H1 (cell line): ENCODE measurements at regions of chr17 and their contacts with region 1.

Region 1: GRCh38 chr17:8887834-8888703 is 20.6 kb upstream of the PIK3R6 start:
- DNase-seq: peak in 1 of 2 experiments; percentile 87
- H3K4me3 ChIP-seq: no peak overlapping the region
- H3K27ac ChIP-seq: no peak overlapping the region
- H3K4me1 ChIP-seq: peaks cover 0 to 9% (median 3%) of the 10 kb centered on the region in 4 experiments; a peak in 3 of 7 replicates
- H3K27me3 ChIP-seq: no peaks in the 10 kb centered on the region
- CTCF ChIP-seq: peak; percentile 67 to 83 (median 71)
- EP300 ChIP-seq: no peak
- POLR2A ChIP-seq: no peak
- RAD21 ChIP-seq: peak; percentile 73 to 82

Region 2: GRCh38 chr17:8697323-8697741 is 190.7 kb before region 1 on chr17:
- CTCF ChIA-PET with region 1: no interaction called
- POLR2A ChIA-PET with region 1: no interaction called
- DNase-seq: no peak
- H3K4me3 ChIP-seq: peak overlapping the region in 1 of 4 experiments; percentile 6; a peak in 2 of 8 replicates
- H3K27ac ChIP-seq: peak overlapping the region; percentile 55; the same call in 1 of the 2 replicates
- H3K4me1 ChIP-seq: peaks cover 12 to 24% (median 18%) of the 10 kb centered on the region in 4 experiments; a peak in 6 of 7 replicates
- H3K27me3 ChIP-seq: no peaks in the 10 kb centered on the region
- CTCF ChIP-seq: no peak
- EP300 ChIP-seq: no peak
- POLR2A ChIP-seq: peak in 1 of 2 experiments; percentile 8; a peak in 1 of 3 replicates
- RAD21 ChIP-seq: no peak

Region 3: DNA sequence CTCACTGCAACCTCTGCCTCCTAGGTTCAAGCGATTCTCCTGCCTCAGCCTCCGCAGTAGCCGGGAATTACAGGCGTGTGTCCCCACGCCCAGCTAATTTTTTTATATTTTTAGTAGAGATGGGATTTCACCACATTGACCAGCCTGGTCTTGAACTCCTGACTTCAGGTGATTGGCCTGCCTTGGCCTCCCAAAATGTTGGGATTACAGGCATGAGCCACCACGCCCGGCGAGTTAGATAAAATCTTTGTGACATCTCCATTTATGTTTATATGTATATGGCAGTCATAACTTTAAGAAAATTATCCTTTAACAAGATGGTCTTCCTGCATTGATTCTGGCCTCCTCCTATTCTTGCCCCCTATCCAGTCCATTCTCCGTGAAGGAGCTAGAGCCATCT is 167.5 kb before region 1 on chr17:
- CTCF ChIA-PET with region 1: no interaction called
- POLR2A ChIA-PET with region 1: no interaction called
- DNase-seq: no peak
- H3K4me3 ChIP-seq: no peak overlapping the region
- H3K27ac ChIP-seq: no peak overlapping the region
- H3K4me1 ChIP-seq: no peaks in the 10 kb centered on the region
- H3K27me3 ChIP-seq: no peaks in the 10 kb centered on the region
- CTCF ChIP-seq: no peak
- EP300 ChIP-seq: no peak
- POLR2A ChIP-seq: no peak
- RAD21 ChIP-seq: no peak

Region 4: GRCh38 chr17:8818047-8818446 is 70.0 kb before region 1 on chr17:
- CTCF ChIA-PET with region 1: no interaction called
- POLR2A ChIA-PET with region 1: no interaction called
- DNase-seq: peak in 1 of 2 experiments; percentile 35
- H3K4me3 ChIP-seq: no peak overlapping the region
- H3K27ac ChIP-seq: no peak overlapping the region
- H3K4me1 ChIP-seq: no peaks in the 10 kb centered on the region; a peak in 1 of 7 replicates
- H3K27me3 ChIP-seq: no peaks in the 10 kb centered on the region
- CTCF ChIP-seq: no peak
- EP300 ChIP-seq: no peak
- POLR2A ChIP-seq: no peak
- RAD21 ChIP-seq: no peak

Region 5: DNA sequence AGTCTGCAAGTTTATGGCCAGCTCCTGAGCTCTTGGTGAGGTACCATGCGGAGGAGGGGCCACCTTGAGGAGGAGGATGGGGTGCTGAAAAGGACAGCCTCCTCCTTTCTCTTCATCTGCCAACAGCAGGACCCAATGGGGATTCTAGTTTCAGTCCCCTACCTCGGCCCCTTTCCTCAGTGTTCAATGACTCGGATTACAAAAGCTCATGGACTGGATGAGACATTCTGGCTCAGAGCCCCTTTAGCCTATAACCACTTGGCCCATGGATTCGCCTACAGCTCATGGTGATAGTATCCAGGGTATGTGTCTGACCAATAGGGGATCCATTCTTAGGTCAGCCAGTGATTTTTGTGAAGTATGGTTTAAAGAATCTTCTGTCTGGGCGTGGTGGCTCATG is 12.1 kb before region 1 on chr17:
- CTCF ChIA-PET with region 1: interaction called, 19 read pairs
- POLR2A ChIA-PET with region 1: no interaction called
- DNase-seq: no peak
- H3K4me3 ChIP-seq: no peak overlapping the region
- H3K27ac ChIP-seq: no peak overlapping the region
- H3K4me1 ChIP-seq: peaks cover 0 to 9% (median 7%) of the 10 kb centered on the region in 4 experiments; a peak in 6 of 7 replicates
- H3K27me3 ChIP-seq: no peaks in the 10 kb centered on the region
- CTCF ChIP-seq: no peak
- EP300 ChIP-seq: no peak
- POLR2A ChIP-seq: no peak
- RAD21 ChIP-seq: no peak

Region 6: DNA sequence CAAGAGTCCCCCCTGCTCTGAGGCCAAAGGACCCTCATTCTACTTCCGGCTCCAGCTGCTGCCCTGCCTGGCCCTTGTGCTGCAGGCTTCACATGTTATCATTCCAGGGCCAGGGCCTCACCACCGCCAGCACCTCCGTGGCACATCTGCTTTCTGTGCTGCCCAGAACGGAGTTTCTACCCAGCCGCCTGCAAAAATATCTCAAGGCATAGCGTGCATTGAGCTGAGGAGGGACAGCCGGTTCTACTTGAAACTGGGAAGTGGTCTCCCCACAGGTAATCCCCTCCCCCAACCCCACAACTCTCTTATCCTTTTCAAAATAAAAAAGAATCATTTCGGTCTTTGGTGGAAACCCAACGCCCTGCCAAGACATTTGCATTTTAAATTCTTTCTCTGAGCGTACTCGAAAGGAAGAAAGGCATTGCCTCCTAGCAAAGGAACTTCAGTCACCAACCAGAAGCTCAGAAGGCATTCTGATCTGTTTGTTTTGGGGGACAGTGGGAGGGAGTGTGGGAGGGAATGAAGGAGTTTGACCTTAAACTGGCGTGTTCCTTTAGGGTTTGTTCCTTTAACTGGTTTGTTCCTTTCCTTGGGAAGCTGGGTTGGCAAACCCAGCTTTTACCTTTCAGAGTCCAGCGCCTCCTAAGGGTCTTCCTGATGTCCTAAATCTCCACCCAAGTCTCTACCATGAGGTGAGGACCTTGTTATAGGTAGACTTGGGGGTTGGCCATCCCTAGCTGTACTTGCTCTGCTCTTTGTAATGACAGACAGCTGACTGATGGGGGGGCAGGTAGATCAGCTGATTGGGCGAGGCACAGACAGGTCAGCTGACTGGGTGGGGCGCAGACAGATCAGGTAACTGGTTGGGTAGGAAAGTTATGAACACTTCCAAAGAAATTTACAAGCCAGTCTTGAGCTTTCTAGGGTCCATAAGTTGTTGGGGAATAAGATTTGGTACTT is 12.8 kb after region 1 on chr17:
- CTCF ChIA-PET with region 1: interaction called, 72 read pairs
- POLR2A ChIA-PET with region 1: interaction called, 4 read pairs
- DNase-seq: no peak
- H3K4me3 ChIP-seq: peak overlapping the region in 1 of 4 experiments; percentile 34; a peak in 1 of 8 replicates
- H3K27ac ChIP-seq: no peak overlapping the region
- H3K4me1 ChIP-seq: peaks cover 0 to 10% (median 5%) of the 10 kb centered on the region in 4 experiments; a peak in 5 of 7 replicates
- H3K27me3 ChIP-seq: no peaks in the 10 kb centered on the region
- CTCF ChIP-seq: peak in 2 of 3 experiments; percentile 15 to 38; a peak in 2 of 4 replicates
- EP300 ChIP-seq: no peak
- POLR2A ChIP-seq: no peak
- RAD21 ChIP-seq: no peak; a peak in 1 of 4 replicates

Region 7: DNA sequence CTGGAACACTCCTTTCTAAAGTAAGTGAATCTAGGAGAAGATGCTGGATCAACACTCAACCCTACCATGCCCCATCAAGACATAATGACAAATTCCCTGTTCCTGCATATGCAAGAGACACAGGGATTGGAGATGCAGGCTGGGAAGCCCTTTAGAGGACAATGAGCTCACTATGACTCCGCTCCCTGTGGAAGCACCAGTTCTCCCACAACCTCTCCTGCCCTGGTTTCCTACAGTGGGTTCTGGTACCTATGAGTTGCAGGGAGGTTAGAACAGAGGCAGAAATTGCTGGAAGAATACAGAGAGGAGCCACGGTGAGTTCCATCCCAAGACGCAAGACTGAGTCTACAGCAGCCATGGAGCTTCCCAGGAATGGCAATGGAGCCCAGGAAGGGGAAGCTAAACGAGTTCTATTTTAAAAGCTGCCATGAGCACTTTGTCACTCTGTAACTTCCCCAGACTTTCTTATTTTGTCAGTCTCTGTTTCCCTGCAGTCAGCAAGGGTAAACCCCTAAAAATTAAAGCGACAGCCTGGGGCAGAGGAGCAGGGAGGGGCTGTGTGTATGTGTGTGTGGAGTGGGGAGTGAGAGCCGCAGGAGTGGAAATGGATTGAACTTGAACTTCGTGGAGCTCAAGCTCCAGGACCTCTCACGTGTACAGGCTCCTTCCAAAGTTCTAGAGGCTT is 21.7 kb after region 1 on chr17:
- CTCF ChIA-PET with region 1: interaction called, 15 read pairs
- POLR2A ChIA-PET with region 1: interaction called, 4 read pairs
- DNase-seq: no peak
- H3K4me3 ChIP-seq: no peak overlapping the region
- H3K27ac ChIP-seq: no peak overlapping the region
- H3K4me1 ChIP-seq: no peaks in the 10 kb centered on the region
- H3K27me3 ChIP-seq: no peaks in the 10 kb centered on the region
- CTCF ChIP-seq: no peak
- EP300 ChIP-seq: no peak
- POLR2A ChIP-seq: no peak
- RAD21 ChIP-seq: no peak

Region 8: GRCh38 chr17:8954339-8954738 is 66.3 kb after region 1 on chr17:
- CTCF ChIA-PET with region 1: interaction called, 12 read pairs
- POLR2A ChIA-PET with region 1: no interaction called
- DNase-seq: peak in 1 of 2 experiments; percentile 27
- H3K4me3 ChIP-seq: no peak overlapping the region
- H3K27ac ChIP-seq: no peak overlapping the region
- H3K4me1 ChIP-seq: no peaks in the 10 kb centered on the region; a peak in 2 of 7 replicates
- H3K27me3 ChIP-seq: no peaks in the 10 kb centered on the region
- CTCF ChIP-seq: no peak
- EP300 ChIP-seq: no peak
- POLR2A ChIP-seq: no peak
- RAD21 ChIP-seq: no peak